Mammary epithelial cell (primary cell): ENCODE measurements at regions of chr11 and their contacts with region 1.

Region 1: DNA sequence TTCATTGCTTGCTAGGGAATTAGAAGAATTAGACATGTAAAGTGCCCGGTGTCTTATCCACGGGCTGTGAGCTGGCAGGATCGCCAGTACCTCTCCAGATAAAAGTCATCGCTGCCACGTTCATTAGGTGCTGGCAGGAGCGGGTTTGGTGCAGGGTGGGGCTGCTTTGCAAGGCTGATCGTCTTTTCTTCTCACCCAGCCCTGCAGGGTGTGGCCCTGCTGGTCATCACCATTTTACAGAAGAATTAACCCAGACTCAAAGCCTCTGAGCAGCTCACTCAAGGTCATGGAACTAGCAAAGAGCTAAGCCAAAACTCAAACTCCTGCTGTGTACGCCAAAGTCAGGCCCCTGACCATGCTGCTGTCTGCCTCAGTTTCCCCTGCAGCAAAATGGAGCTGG is 6.1 kb upstream of the FGF4 start:
- DNase-seq: no peak
- H3K4me3 ChIP-seq: no peak overlapping the region
- H3K27ac ChIP-seq: no peak overlapping the region
- H3K4me1 ChIP-seq: no peaks in the 10 kb centered on the region
- H3K27me3 ChIP-seq: peaks cover 2% of the 10 kb centered on the region
- CTCF ChIP-seq: no peak

Region 2: DNA sequence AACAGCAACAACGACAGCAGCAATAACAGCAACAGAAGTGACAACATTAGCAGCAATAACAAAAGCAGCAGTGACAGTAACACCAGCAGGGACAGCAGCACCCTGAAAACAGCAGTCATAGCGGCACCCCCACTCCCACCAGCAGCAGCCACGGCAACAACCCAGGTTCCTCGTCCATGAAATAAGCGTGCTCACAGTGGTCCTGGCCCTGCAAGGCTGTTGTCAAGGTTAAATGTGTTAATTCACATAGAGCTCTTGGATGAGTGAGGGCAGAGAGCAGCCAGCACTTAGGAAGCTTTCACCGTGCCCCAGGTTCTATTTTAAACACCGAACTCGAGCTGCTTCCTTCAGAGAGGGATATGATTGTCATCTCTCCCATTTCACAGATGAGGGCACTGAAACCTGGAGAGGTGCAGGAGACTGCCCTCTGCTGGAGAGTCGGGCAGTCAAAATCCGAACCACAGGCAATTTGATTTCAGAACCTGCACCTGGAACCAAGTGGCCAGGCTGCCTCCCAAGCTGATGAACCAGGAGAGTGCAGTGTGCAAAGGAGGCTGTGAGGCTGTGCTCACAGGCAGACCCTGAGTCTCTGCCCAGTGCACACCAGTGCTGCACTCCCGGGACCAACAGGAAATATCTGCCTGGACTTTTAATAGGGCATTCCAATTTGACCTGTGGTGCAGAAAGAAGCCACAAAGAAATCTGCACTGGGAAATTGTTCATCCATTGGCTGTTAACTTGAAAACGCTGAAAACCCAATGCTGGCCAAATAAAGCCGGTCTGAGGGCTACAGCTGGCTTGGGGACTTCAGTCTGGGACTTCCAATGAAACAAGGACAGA is 60.8 kb after region 1 on chr11:
- CTCF ChIA-PET with region 1: no interaction called
- dilution Hi-C with region 1: loop called (anchors 5 kb)
- in situ Hi-C with region 1: no loop called
- intact Hi-C with region 1: no loop called
- DNase-seq: no peak
- H3K4me3 ChIP-seq: no peak overlapping the region
- H3K27ac ChIP-seq: no peak overlapping the region
- H3K4me1 ChIP-seq: peaks cover 10% of the 10 kb centered on the region
- H3K27me3 ChIP-seq: no peaks in the 10 kb centered on the region
- CTCF ChIP-seq: peak; percentile 32 to 38

Region 3: DNA sequence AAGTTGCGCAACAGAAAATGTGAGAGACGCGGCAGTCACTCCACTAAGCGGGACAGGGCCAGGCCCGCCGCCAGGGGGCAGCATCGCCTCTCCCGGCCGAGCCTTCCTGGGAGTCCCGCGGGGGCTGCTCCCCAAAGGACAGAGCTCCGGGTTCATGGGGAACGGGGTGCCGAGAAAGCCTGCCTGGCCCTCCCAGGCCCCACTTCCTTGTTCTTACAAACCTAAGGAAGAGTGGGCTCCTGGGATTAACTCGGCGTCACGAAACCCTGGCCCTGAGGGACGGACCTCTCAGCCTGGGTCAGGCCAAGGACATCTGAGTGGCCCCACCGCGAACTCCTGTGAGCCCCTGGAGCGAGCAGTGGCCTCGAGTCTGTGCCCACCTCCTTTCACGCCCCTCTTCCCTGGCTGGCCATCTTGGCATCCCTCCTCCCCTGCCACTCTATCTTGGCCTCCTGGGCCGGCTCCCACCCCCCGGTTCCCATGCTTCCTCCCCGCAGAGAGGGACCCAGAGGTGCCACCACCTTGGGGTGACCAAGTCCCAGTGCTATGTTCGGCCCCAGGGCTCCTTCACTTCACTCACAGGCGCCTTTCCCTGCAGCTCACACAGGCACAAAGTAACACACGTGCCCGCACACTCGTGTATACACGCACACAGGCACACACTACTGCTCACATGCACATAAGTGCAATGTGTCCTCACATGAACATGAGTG is 137.9 kb after region 1 on chr11:
- CTCF ChIA-PET with region 1: no interaction called
- dilution Hi-C with region 1: no loop called
- in situ Hi-C with region 1: no loop called
- intact Hi-C with region 1: no loop called
- DNase-seq: peak; percentile 39
- H3K4me3 ChIP-seq: no peak overlapping the region
- H3K27ac ChIP-seq: no peak overlapping the region
- H3K4me1 ChIP-seq: peaks cover 33% of the 10 kb centered on the region
- H3K27me3 ChIP-seq: no peaks in the 10 kb centered on the region
- CTCF ChIP-seq: peak; percentile 79 to 96